ENCODE measurements at regions of chr4 and their contacts with region 1.

Region 1: DNA sequence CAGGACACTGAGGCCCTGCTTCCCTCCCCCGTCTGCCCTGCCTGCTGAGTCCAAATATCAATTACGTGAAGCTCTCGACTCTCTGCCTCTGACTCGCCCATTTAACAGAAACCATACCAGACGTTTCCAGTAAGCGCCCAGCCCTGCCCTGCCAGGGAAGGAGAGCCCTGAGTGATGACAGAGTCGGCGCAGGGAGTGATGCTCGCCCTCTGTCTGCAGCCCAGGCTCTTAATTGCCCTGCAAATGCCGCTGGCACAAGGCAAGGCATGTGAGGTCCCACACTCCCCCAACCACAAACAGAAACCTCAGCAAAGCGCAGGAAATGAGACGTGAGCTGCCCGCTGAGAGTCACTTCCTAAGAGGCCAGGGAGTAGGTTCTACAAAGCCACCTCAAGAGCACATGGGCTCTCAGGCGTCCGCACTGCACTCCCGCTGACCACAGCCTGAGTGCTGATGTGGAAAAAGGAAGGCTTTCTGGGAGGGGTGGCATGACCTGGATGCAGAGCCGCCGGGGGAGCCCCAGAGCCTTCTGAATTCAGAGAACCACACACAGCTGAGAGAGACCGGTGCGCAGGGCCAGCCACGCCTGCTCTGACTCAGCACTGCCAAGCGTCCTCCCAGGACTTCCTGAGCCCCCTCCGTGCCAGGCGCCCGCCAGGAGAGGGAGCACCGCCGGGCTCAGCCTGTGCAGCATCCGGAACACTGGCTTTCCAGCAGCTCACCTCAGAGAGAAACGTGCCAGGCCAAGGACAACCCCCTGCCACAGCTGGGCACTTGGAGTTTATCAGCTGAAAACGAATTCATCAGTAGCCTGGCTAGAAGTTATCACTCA is 5.3 kb downstream of the ZFYVE28 start:
- DNase-seq: peak; percentile 89

Region 2: GRCh38 chr4:2262143-2262943 is 150.8 kb before region 1 on chr4:
- intact Hi-C with region 1: loop called (anchors 2 kb)
- DNase-seq: peak; percentile 100

Region 3: GRCh38 chr4:2330091-2331042 is 82.7 kb before region 1 on chr4:
- intact Hi-C with region 1: no loop called
- DNase-seq: no peak

Region 4: GRCh38 chr4:2368746-2369437 is 44.2 kb before region 1 on chr4:
- intact Hi-C with region 1: no loop called
- DNase-seq: no peak

Measured in cardiac septum (tissue), 1 donor.